GM12878 (cell line): ENCODE measurements at regions of chr11 and their contacts with region 1.

Region 1: DNA sequence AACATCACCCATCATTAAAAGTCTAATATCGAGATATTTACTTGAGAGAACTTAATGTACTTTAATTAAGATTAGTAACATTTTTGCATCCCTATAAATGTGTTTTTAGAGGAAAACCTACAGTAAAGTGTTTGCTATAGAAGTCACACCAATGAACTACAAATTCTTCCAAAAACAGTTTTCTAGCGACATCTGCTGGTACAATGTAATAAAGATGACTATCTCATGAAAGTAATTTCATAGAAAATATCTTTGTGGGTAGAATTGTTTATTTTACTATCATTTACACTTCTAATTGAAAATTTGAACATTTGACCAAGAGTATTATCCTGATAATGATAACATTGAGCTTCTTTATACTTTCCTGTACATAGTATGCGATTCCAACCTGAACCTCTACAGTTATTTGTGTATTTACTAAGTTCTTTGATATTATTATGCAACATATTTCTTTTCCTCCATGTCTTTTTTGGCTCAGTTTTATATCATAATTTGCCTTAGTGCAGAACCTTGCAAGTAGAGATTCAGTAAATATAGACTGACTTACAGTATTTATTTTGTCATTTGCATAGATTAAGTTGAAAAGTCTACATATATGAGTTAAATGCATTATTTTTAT is 252.7 kb downstream of the TMEM135 start:
- DNase-seq: no peak
- ATAC-seq: peak; percentile 68
- H3K4me3 ChIP-seq: no peak overlapping the region
- H3K27ac ChIP-seq: no peak overlapping the region
- H3K4me1 ChIP-seq: no peaks in the 10 kb centered on the region
- H3K27me3 ChIP-seq: no peaks in the 10 kb centered on the region
- CTCF ChIP-seq: peak; percentile 33 to 75 (median 42); a peak in 4 of 6 replicates
- EP300 ChIP-seq: no peak
- POLR2A ChIP-seq: no peak
- RAD21 ChIP-seq: peak; percentile 83

Region 2: GRCh38 chr11:86869966-86870570 is 420.3 kb before region 1 on chr11:
- CTCF ChIA-PET with region 1: interaction called, 6 read pairs
- POLR2A ChIA-PET with region 1: no interaction called
- RAD21 ChIA-PET with region 1: no interaction called
- SMC1A ChIA-PET with region 1: no interaction called
- in situ Hi-C with region 1: no loop called
- intact Hi-C with region 1: loop called (anchors 1 kb)
- DNase-seq: no peak
- ATAC-seq: peak; percentile 90
- H3K4me3 ChIP-seq: no peak overlapping the region
- H3K27ac ChIP-seq: no peak overlapping the region
- H3K4me1 ChIP-seq: no peaks in the 10 kb centered on the region
- H3K27me3 ChIP-seq: no peaks in the 10 kb centered on the region
- CTCF ChIP-seq: peak; percentile 69 to 73 (median 70)
- EP300 ChIP-seq: no peak
- POLR2A ChIP-seq: no peak
- RAD21 ChIP-seq: peak; percentile 69

Region 3: GRCh38 chr11:86938900-86939880 is 351.2 kb before region 1 on chr11:
- CTCF ChIA-PET with region 1: interaction called, 21 read pairs
- POLR2A ChIA-PET with region 1: no interaction called
- RAD21 ChIA-PET with region 1: interaction called, 18 read pairs
- SMC1A ChIA-PET with region 1: interaction called, 20 read pairs
- in situ Hi-C with region 1: loop called (anchors 5 kb)
- intact Hi-C with region 1: loop called (anchors 1 kb)
- DNase-seq: no peak
- ATAC-seq: peak; percentile 81
- H3K4me3 ChIP-seq: no peak overlapping the region
- H3K27ac ChIP-seq: no peak overlapping the region
- H3K4me1 ChIP-seq: no peaks in the 10 kb centered on the region
- H3K27me3 ChIP-seq: no peaks in the 10 kb centered on the region; a peak in 1 of 4 replicates
- CTCF ChIP-seq: peak; percentile 51 to 66 (median 53); a peak in 5 of 6 replicates
- EP300 ChIP-seq: no peak
- POLR2A ChIP-seq: no peak
- RAD21 ChIP-seq: peak; percentile 75

Region 4: DNA sequence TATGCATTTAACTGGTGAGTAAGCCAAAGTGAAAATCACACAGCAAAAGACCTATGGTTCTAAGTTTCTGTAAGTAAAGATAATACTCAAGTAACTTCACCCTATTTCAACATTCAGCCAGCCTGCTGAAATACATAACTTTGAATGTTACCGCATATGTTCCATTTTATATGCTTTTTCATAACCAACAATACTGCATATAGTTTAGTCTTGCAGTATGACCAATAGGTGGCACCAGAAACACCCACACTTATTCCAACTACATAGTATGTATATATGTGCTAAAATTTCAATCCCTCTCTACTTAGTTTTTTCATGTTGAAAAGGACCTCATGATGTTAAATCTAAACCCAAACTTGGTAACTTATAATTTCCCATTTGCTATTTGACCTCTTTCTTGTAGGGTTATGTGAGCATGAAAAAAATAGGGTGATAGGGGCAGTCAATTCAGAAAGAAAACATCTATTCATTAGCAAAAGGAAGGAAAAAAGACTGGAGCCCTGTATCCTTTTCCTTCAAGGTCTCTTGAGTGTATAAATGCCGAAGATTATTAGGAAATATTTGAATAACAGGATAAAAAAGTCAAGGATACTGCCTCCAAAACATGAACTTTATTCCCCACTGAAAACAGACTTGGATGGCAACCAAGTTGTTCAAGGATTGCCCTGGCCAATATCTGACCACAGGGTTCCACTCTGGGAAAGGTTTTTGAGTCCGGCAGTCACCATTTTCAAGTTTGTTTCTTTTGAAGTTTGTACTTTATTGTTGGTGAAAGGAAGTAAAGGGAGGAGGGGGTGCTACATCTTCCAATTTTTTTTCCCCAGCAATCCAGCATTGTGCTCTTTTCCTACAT is 311.4 kb before region 1 on chr11:
- CTCF ChIA-PET with region 1: interaction called, 6 read pairs
- POLR2A ChIA-PET with region 1: no interaction called
- RAD21 ChIA-PET with region 1: no interaction called
- SMC1A ChIA-PET with region 1: interaction called, 4 read pairs
- in situ Hi-C with region 1: no loop called
- intact Hi-C with region 1: loop called (anchors 1 kb)
- DNase-seq: no peak
- ATAC-seq: peak; percentile 91
- H3K4me3 ChIP-seq: no peak overlapping the region
- H3K27ac ChIP-seq: no peak overlapping the region
- H3K4me1 ChIP-seq: no peaks in the 10 kb centered on the region
- H3K27me3 ChIP-seq: 0 out of 4 replicates have a peak, but pooled peaks cover 0 to 3% of the 10 kb centered on the region in 2 experiments
- CTCF ChIP-seq: peak; percentile 43 to 64 (median 60); a peak in 5 of 6 replicates
- EP300 ChIP-seq: no peak
- POLR2A ChIP-seq: no peak
- RAD21 ChIP-seq: peak; percentile 55

Region 5: DNA sequence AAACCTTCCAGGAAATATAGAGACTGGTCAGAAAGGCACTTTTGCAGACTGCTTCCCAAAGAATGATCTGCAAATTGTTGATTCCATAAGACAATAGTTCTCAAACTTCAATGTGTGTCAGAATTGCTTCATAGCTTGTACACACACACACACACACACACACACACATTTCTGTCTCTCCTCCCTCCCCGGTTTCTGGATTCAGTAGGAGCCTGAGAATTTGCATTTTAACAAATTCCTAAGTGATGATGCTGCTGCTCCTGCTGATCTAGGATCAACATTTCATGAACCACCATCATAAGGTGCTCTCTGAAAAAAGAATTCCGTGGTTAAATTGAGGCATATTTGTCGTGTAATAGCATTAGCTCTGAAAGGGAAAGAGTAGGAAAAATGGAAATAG is 299.9 kb before region 1 on chr11:
- CTCF ChIA-PET with region 1: interaction called, 17 read pairs
- POLR2A ChIA-PET with region 1: no interaction called
- RAD21 ChIA-PET with region 1: interaction called, 4 read pairs
- SMC1A ChIA-PET with region 1: interaction called, 9 read pairs
- in situ Hi-C with region 1: no loop called
- intact Hi-C with region 1: loop called (anchors 1 kb)
- DNase-seq: no peak
- ATAC-seq: no peak
- H3K4me3 ChIP-seq: no peak overlapping the region
- H3K27ac ChIP-seq: no peak overlapping the region
- H3K4me1 ChIP-seq: no peaks in the 10 kb centered on the region
- H3K27me3 ChIP-seq: no peaks in the 10 kb centered on the region
- CTCF ChIP-seq: no peak
- EP300 ChIP-seq: no peak
- POLR2A ChIP-seq: no peak
- RAD21 ChIP-seq: no peak

Region 6: GRCh38 chr11:87097582-87097981 is 192.8 kb before region 1 on chr11:
- CTCF ChIA-PET with region 1: no interaction called
- POLR2A ChIA-PET with region 1: no interaction called
- RAD21 ChIA-PET with region 1: interaction called, 3 read pairs
- SMC1A ChIA-PET with region 1: no interaction called
- in situ Hi-C with region 1: no loop called
- intact Hi-C with region 1: loop called (anchors 5 kb)
- DNase-seq: no peak
- ATAC-seq: peak; percentile 93
- H3K4me3 ChIP-seq: no peak overlapping the region
- H3K27ac ChIP-seq: no peak overlapping the region
- H3K4me1 ChIP-seq: no peaks in the 10 kb centered on the region
- H3K27me3 ChIP-seq: no peaks in the 10 kb centered on the region
- CTCF ChIP-seq: peak; percentile 64 to 78 (median 68)
- EP300 ChIP-seq: no peak
- POLR2A ChIP-seq: no peak
- RAD21 ChIP-seq: peak; percentile 25; the same call in 1 of the 2 replicates

Region 7: GRCh38 chr11:87213444-87213843 is 77.0 kb before region 1 on chr11:
- CTCF ChIA-PET with region 1: no interaction called
- POLR2A ChIA-PET with region 1: no interaction called
- RAD21 ChIA-PET with region 1: no interaction called
- SMC1A ChIA-PET with region 1: no interaction called
- in situ Hi-C with region 1: no loop called
- intact Hi-C with region 1: no loop called
- DNase-seq: no peak
- ATAC-seq: peak; percentile 81
- H3K4me3 ChIP-seq: no peak overlapping the region
- H3K27ac ChIP-seq: no peak overlapping the region
- H3K4me1 ChIP-seq: no peaks in the 10 kb centered on the region
- H3K27me3 ChIP-seq: no peaks in the 10 kb centered on the region
- CTCF ChIP-seq: no peak
- EP300 ChIP-seq: no peak
- POLR2A ChIP-seq: no peak
- RAD21 ChIP-seq: no peak

Region 8: GRCh38 chr11:87236368-87236767 is 54.0 kb before region 1 on chr11:
- CTCF ChIA-PET with region 1: no interaction called
- POLR2A ChIA-PET with region 1: no interaction called
- RAD21 ChIA-PET with region 1: no interaction called
- SMC1A ChIA-PET with region 1: no interaction called
- in situ Hi-C with region 1: no loop called
- intact Hi-C with region 1: no loop called
- DNase-seq: no peak
- ATAC-seq: no peak
- H3K4me3 ChIP-seq: no peak overlapping the region
- H3K27ac ChIP-seq: no peak overlapping the region
- H3K4me1 ChIP-seq: no peaks in the 10 kb centered on the region
- H3K27me3 ChIP-seq: no peaks in the 10 kb centered on the region
- CTCF ChIP-seq: no peak
- EP300 ChIP-seq: no peak
- POLR2A ChIP-seq: no peak
- RAD21 ChIP-seq: no peak

Region 9: GRCh38 chr11:88414385-88414861 is 1124.0 kb after region 1 on chr11:
- CTCF ChIA-PET with region 1: no interaction called
- POLR2A ChIA-PET with region 1: no interaction called
- RAD21 ChIA-PET with region 1: no interaction called
- SMC1A ChIA-PET with region 1: no interaction called
- in situ Hi-C with region 1: no loop called
- intact Hi-C with region 1: no loop called
- DNase-seq: no peak
- ATAC-seq: no peak
- H3K4me3 ChIP-seq: no peak overlapping the region
- H3K27ac ChIP-seq: peak overlapping the region; percentile 50
- H3K4me1 ChIP-seq: peaks cover 17% of the 10 kb centered on the region
- H3K27me3 ChIP-seq: no peaks in the 10 kb centered on the region
- CTCF ChIP-seq: no peak
- EP300 ChIP-seq: no peak
- POLR2A ChIP-seq: no peak
- RAD21 ChIP-seq: no peak